Endothelial cell of umbilical vein (primary cell): ENCODE measurements at regions of chr2 and their contacts with region 1.

Region 1: DNA sequence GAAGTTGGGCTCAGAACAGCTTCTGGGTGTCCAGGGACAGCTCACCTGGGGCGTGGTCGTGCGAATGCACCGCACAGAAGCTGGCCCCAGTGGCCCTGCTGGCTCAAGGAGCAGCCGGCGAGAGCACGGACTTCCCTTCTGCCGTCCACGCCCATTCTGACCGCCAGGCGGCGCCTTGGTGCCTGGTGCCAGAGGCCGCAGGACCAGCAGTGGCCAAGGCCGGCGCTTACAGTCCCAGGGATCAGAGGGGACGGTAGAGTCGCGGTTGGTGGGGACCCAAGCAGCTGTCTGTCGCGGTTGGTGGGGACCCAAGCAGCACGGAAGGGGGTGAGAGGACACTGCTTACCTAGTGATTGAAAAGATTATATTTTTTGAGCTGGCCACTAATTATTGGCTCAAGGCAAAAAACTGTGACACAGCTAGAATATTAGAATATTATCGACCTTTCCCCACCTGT is 25.7 kb downstream of the NPPC start:
- DNase-seq: peak; percentile 71
- H3K4me3 ChIP-seq: no peak overlapping the region
- H3K27ac ChIP-seq: no peak overlapping the region
- H3K4me1 ChIP-seq: no peaks in the 10 kb centered on the region
- H3K27me3 ChIP-seq: no peaks in the 10 kb centered on the region
- CTCF ChIP-seq: peak; percentile 96 to 98
- POLR2A ChIP-seq: no peak

Region 2: GRCh38 chr2:231800493-231801091 is 99.9 kb before region 1 on chr2:
- CTCF ChIA-PET with region 1: no interaction called
- POLR2A ChIA-PET with region 1: no interaction called
- dilution Hi-C with region 1: no loop called
- intact Hi-C with region 1: loop called (anchors 1 kb)
- DNase-seq: peak; percentile 51
- H3K4me3 ChIP-seq: no peak overlapping the region
- H3K27ac ChIP-seq: no peak overlapping the region
- H3K4me1 ChIP-seq: no peaks in the 10 kb centered on the region
- H3K27me3 ChIP-seq: no peaks in the 10 kb centered on the region
- CTCF ChIP-seq: peak; percentile 68 to 83
- POLR2A ChIP-seq: no peak

Region 3: GRCh38 chr2:231910771-231911170 is 10.3 kb after region 1 on chr2:
- CTCF ChIA-PET with region 1: interaction called, 27 read pairs
- POLR2A ChIA-PET with region 1: no interaction called
- dilution Hi-C with region 1: no loop called
- intact Hi-C with region 1: no loop called
- DNase-seq: no peak
- H3K4me3 ChIP-seq: no peak overlapping the region
- H3K27ac ChIP-seq: no peak overlapping the region
- H3K4me1 ChIP-seq: no peaks in the 10 kb centered on the region
- H3K27me3 ChIP-seq: peaks cover 0 to 4% of the 10 kb centered on the region in 2 experiments
- CTCF ChIP-seq: no peak
- POLR2A ChIP-seq: no peak

Region 4: GRCh38 chr2:232142049-232142448 is 241.5 kb after region 1 on chr2:
- CTCF ChIA-PET with region 1: interaction called, 18 read pairs
- POLR2A ChIA-PET with region 1: no interaction called
- dilution Hi-C with region 1: no loop called
- intact Hi-C with region 1: no loop called
- DNase-seq: peak; percentile 41
- H3K4me3 ChIP-seq: no peak overlapping the region
- H3K27ac ChIP-seq: no peak overlapping the region
- H3K4me1 ChIP-seq: peaks cover 12% of the 10 kb centered on the region
- H3K27me3 ChIP-seq: no peaks in the 10 kb centered on the region
- CTCF ChIP-seq: peak; percentile 64 to 70
- POLR2A ChIP-seq: no peak

Region 5: GRCh38 chr2:232327105-232328041 is 426.9 kb after region 1 on chr2:
- CTCF ChIA-PET with region 1: interaction called, 54 read pairs
- POLR2A ChIA-PET with region 1: no interaction called
- dilution Hi-C with region 1: no loop called
- intact Hi-C with region 1: loop called (anchors 1 kb)
- DNase-seq: peak; percentile 73
- H3K4me3 ChIP-seq: no peak overlapping the region
- H3K27ac ChIP-seq: no peak overlapping the region
- H3K4me1 ChIP-seq: no peaks in the 10 kb centered on the region
- H3K27me3 ChIP-seq: no peaks in the 10 kb centered on the region
- CTCF ChIP-seq: peak; percentile 74 to 86
- POLR2A ChIP-seq: no peak

Region 6: GRCh38 chr2:232438951-232439757 is 538.6 kb after region 1 on chr2:
- CTCF ChIA-PET with region 1: interaction called, 45 read pairs
- POLR2A ChIA-PET with region 1: no interaction called
- dilution Hi-C with region 1: no loop called
- intact Hi-C with region 1: loop called (anchors 1 kb)
- DNase-seq: peak; percentile 10
- H3K4me3 ChIP-seq: no peak overlapping the region
- H3K27ac ChIP-seq: no peak overlapping the region
- H3K4me1 ChIP-seq: no peaks in the 10 kb centered on the region
- H3K27me3 ChIP-seq: peaks cover 0 to 2% of the 10 kb centered on the region in 2 experiments
- CTCF ChIP-seq: peak; percentile 14 to 46
- POLR2A ChIP-seq: no peak